MCF 10A (cell line): ENCODE measurements at regions of chr1 and their contacts with region 1.

Region 1: DNA sequence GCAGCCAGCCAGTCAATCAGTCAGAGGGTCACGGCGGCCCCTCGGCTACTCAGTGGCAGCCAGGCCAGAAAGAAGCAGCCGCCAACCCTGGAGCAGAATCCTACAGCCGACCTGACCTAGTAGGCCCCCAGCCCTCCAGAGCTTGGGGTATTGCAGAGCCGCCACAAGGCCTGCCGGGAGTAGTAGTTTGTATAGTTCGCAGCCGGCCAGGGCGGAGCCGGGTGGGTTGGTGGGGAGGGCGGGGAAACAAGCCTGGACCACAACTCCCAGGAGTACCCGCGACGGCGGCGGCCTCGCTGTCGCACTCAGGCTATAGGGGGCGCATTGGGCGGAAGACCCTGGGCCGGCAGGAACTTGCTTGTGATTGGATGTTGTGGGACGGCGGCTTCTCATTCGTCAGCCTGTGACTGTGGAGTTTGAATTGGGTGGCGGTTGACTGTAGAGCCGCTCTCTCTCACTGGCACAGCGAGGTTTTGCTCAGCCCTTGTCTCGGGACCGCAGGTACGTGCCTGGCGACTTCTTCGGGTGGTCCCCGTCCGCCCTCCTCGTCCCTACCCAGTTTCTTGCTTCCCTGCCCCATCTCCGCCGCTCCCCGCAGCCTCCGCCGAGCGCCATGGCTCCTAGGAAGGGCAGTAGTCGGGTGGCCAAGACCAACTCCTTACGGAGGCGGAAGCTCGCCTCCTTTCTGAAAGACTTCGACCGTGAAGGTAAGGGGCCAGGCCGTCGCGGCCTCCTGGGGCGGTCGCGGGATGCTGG is at the start of gene CDCA8:
- DNase-seq: peak; percentile 98
- H3K4me3 Mint-ChIP-seq: peak within 1 kb of the TSS; percentile 96
- H3K27ac Mint-ChIP-seq: peak within 1 kb of the TSS; percentile 90
- H3K4me1 Mint-ChIP-seq: peaks cover 28% of the 10 kb centered on the region
- H3K27me3 Mint-ChIP-seq: no peaks in the 10 kb centered on the region
- CTCF ChIP-seq: peak; percentile 41
- total RNA-seq, gene CDCA8: 17.3 and 21.8 TPM in 2 replicates

Region 2: DNA sequence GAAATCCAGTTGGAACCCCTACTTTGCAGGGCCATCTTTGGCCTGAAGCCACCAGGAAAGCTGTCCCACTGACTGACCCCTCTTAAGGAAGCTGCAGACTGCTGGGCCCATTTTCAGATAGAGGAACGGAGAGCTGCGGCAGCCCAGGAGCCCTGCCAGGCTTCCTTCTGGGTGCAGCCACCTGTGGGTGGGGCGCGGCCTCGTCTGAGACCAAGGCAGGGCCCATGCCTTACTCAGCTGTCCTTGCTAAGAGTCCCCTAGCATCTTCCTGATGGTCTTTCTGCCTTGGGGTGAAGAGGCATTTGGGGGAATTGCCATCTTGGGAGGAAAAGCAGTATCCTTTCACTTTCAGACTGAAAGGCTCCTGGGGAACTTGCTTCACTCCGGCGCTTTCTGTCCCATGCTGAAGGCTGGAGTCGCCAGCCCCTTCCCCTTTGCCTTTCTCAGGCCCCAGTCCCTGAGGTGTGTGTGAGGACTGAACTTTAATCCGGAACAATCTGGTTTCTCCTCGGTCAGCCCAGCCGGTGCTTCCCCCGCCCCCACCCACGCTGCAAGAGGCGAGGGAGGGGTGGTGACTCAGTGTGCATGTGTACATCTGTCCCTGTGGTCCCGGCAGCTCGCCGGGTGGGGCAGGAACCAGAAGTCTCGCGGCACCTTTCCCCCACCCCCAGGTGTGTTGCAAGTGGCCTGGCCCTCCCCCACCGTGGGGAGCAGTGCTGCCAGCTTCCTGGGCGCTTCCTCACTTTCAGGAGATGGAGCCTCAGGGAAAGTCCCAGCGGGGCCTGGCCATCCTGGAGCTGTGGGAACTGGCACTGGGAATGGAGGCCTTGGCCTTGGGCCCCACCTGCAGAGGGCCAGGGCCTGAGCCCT is 212.8 kb before region 1 on chr1:
- CTCF ChIA-PET with region 1: interaction called, 3 read pairs
- POLR2A ChIA-PET with region 1: interaction called, 9 read pairs
- intact Hi-C with region 1: loop called (anchors 5 kb)
- DNase-seq: peak; percentile 99
- H3K4me3 Mint-ChIP-seq: peak overlapping the region; percentile 89
- H3K27ac Mint-ChIP-seq: peak overlapping the region; percentile 93
- H3K4me1 Mint-ChIP-seq: peaks cover 37% of the 10 kb centered on the region
- H3K27me3 Mint-ChIP-seq: no peaks in the 10 kb centered on the region
- CTCF ChIP-seq: no peak

Region 3: GRCh38 chr1:37595440-37596319 is 96.6 kb before region 1 on chr1 and contains the start of gene GNL2:
- CTCF ChIA-PET with region 1: interaction called, 271 read pairs
- POLR2A ChIA-PET with region 1: interaction called, 28 read pairs
- intact Hi-C with region 1: no loop called
- DNase-seq: peak; percentile 94
- H3K4me3 Mint-ChIP-seq: peak within 1 kb of the TSS; percentile 100
- H3K27ac Mint-ChIP-seq: peak within 1 kb of the TSS; percentile 100
- H3K4me1 Mint-ChIP-seq: no peaks in the 10 kb centered on the region
- H3K27me3 Mint-ChIP-seq: no peaks in the 10 kb centered on the region
- CTCF ChIP-seq: no peak
- total RNA-seq, gene GNL2: 103 and 133 TPM in 2 replicates

Region 4: DNA sequence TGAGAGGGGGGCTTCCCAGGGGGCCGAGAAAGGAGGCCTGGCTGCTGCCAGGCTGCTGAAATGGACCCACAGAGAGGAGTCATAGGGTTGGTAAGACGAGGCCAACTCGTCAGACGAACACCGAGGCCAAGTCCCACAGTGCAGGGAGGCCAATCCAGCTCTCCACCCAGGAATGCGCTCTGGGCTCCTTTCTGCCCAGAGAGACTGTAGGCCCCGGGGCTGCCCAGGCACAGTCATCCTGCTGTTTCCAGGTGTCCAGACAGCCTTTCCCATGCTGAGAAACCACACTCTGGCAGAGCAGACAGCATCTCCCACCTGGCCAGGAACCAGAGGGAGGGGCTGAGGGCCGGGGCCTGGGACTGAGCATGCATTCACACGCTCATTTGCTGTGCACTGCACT is 30.9 kb before region 1 on chr1:
- CTCF ChIA-PET with region 1: no interaction called
- POLR2A ChIA-PET with region 1: no interaction called
- intact Hi-C with region 1: no loop called
- DNase-seq: no peak
- H3K4me3 Mint-ChIP-seq: no peak overlapping the region
- H3K27ac Mint-ChIP-seq: no peak overlapping the region
- H3K4me1 Mint-ChIP-seq: no peaks in the 10 kb centered on the region
- H3K27me3 Mint-ChIP-seq: no peaks in the 10 kb centered on the region
- CTCF ChIP-seq: no peak

Region 5: GRCh38 chr1:37734629-37735591 is 42.7 kb after region 1 on chr1:
- CTCF ChIA-PET with region 1: no interaction called
- POLR2A ChIA-PET with region 1: interaction called, 3 read pairs
- intact Hi-C with region 1: loop called (anchors 5 kb)
- DNase-seq: no peak
- H3K4me3 Mint-ChIP-seq: no peak overlapping the region
- H3K27ac Mint-ChIP-seq: no peak overlapping the region
- H3K4me1 Mint-ChIP-seq: peaks cover 4% of the 10 kb centered on the region
- H3K27me3 Mint-ChIP-seq: peaks cover 6% of the 10 kb centered on the region
- CTCF ChIP-seq: no peak

Region 6: GRCh38 chr1:37793773-37794371 is 101.6 kb after region 1 on chr1 and contains the start of gene MANEAL:
- CTCF ChIA-PET with region 1: no interaction called
- POLR2A ChIA-PET with region 1: interaction called, 5 read pairs
- intact Hi-C with region 1: loop called (anchors 1 kb)
- DNase-seq: peak; percentile 46
- H3K4me3 Mint-ChIP-seq: peak within 1 kb of the TSS; percentile 82
- H3K27ac Mint-ChIP-seq: peak within 1 kb of the TSS; percentile 71
- H3K4me1 Mint-ChIP-seq: peaks cover 16% of the 10 kb centered on the region
- H3K27me3 Mint-ChIP-seq: no peaks in the 10 kb centered on the region
- CTCF ChIP-seq: no peak
- total RNA-seq, gene MANEAL: 11.6 and 12.3 TPM in 2 replicates

Region 7: GRCh38 chr1:37859507-37860345 is 167.5 kb after region 1 on chr1 and contains the start of gene MTF1:
- CTCF ChIA-PET with region 1: interaction called, 10 read pairs
- POLR2A ChIA-PET with region 1: interaction called, 43 read pairs
- intact Hi-C with region 1: loop called (anchors 1 kb)
- DNase-seq: peak; percentile 98
- H3K4me3 Mint-ChIP-seq: peak within 1 kb of the TSS; percentile 85
- H3K27ac Mint-ChIP-seq: peak within 1 kb of the TSS; percentile 68
- H3K4me1 Mint-ChIP-seq: peaks cover 12% of the 10 kb centered on the region
- H3K27me3 Mint-ChIP-seq: no peaks in the 10 kb centered on the region
- CTCF ChIP-seq: peak; percentile 88
- total RNA-seq, gene MTF1: 28.4 and 34.7 TPM in 2 replicates

Region 8: GRCh38 chr1:37989361-37989930 is 297.2 kb after region 1 on chr1:
- CTCF ChIA-PET with region 1: no interaction called
- POLR2A ChIA-PET with region 1: interaction called, 10 read pairs
- intact Hi-C with region 1: no loop called
- DNase-seq: peak; percentile 40
- H3K4me3 Mint-ChIP-seq: peak overlapping the region; percentile 88
- H3K27ac Mint-ChIP-seq: peak overlapping the region; percentile 82
- H3K4me1 Mint-ChIP-seq: peaks cover 3% of the 10 kb centered on the region
- H3K27me3 Mint-ChIP-seq: no peaks in the 10 kb centered on the region
- CTCF ChIP-seq: no peak